Uterus (tissue), 4 donors: ENCODE measurements at regions of chr4 and their contacts with region 1.

Region 1: DNA sequence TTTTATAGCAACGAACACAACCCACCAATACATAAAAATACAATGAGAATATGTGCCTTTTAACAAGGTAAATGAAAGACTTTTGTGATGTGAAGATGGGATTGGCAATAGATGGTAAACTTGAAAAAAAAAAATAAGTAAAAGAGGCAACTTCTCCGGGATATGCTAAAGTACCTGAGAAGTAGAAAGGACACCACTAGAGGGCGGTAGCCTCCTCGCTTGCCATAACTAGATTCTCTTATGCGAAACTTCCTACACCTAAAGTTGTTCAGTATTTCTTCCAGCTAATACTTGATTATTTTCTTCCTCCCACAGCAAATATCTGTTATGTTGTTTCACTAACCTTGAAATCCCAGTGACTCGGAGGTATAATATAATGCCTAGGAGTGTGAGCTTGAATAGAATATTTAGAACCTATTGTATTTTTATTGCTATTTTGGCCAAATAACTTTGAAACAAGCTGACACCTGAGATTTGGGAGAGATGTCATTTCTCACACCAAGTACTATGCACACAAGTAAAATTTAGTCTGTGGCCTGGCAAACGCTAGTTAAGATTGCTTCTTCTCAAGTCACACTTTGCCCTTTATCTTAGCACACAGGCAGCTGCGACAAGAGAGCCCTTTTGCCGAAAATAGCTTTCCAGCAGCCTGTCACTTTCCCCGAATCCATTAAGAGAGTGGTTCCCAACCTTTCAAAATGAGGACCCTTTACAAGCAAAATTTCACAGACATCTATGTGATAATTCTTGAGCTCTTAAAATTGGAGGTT is 44.9 kb upstream of the PDLIM5 start:
- DNase-seq: peak; percentile 69 to 89
- H3K4me3 ChIP-seq: no peak overlapping the region
- H3K27ac ChIP-seq: peak overlapping the region; percentile 83 to 93
- H3K4me1 ChIP-seq: peaks cover 0 to 17% of the 10 kb centered on the region in 2 donors
- H3K27me3 ChIP-seq: no peaks in the 10 kb centered on the region
- CTCF ChIP-seq: peak; percentile 70 to 90 (median 79)
- POLR2A ChIP-seq: no peak

Region 2: GRCh38 chr4:93897559-93897958 is 509.3 kb before region 1 on chr4:
- intact Hi-C with region 1: no loop called
- DNase-seq: no peak
- H3K4me3 ChIP-seq: no peak overlapping the region
- H3K27ac ChIP-seq: no peak overlapping the region
- H3K4me1 ChIP-seq: no peaks in the 10 kb centered on the region
- H3K27me3 ChIP-seq: no peaks in the 10 kb centered on the region
- CTCF ChIP-seq: no peak
- POLR2A ChIP-seq: no peak

Region 3: GRCh38 chr4:94262163-94263016 is 144.5 kb before region 1 on chr4:
- intact Hi-C with region 1: no loop called
- DNase-seq: no peak
- H3K4me3 ChIP-seq: no peak overlapping the region
- H3K27ac ChIP-seq: no peak overlapping the region
- H3K4me1 ChIP-seq: no peaks in the 10 kb centered on the region
- H3K27me3 ChIP-seq: no peaks in the 10 kb centered on the region
- CTCF ChIP-seq: no peak
- POLR2A ChIP-seq: no peak

Region 4: DNA sequence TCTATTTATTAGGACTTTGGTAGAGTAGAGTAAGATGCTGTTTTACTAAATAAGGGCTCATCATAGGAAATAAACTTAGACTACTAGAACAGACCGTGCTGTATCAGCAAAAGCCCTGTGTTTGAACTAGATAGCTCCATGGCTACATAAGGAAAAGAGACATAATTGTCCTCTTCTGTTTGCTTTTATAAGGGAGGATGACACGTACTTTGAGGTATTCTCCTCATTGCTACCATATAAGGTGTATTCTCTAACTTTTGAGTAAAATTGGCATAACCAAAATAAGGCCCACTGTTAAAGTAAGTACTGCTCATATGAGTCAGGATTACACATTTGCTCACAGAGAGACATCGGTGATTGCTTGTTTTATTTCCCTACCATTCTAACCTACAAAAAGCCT is 109.2 kb after region 1 on chr4:
- intact Hi-C with region 1: no loop called
- DNase-seq: no peak
- H3K4me3 ChIP-seq: no peak overlapping the region
- H3K27ac ChIP-seq: peak overlapping the region; percentile 88 to 99
- H3K4me1 ChIP-seq: peaks cover 4 to 26% of the 10 kb centered on the region in 2 donors
- H3K27me3 ChIP-seq: no peaks in the 10 kb centered on the region
- CTCF ChIP-seq: no peak
- POLR2A ChIP-seq: no peak

Region 5: DNA sequence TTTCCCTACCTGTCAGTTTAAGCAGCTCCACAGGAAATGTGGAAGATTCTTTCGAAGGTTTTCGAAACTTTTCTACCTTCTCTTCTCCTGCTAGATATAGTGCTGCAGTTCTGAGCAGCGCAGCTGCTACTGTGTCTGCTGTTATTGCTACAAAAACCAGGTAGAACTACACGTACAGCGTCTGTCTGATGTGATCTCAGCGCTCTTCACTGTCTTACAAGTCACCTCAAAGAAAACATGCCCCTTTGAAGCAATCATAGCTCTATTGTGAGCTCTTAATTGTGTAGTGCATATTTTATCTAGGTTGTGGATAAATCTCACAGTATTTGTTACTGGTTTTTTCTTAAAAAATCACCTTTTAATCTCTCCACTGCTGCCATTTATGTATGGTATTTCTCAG is 203.3 kb after region 1 on chr4:
- intact Hi-C with region 1: loop called (anchors 10 kb)
- DNase-seq: no peak
- H3K4me3 ChIP-seq: no peak overlapping the region
- H3K27ac ChIP-seq: no peak overlapping the region
- H3K4me1 ChIP-seq: peaks cover 0 to 14% of the 10 kb centered on the region in 2 donors
- H3K27me3 ChIP-seq: no peaks in the 10 kb centered on the region
- CTCF ChIP-seq: no peak
- POLR2A ChIP-seq: no peak

Region 6: GRCh38 chr4:94654714-94655113 is 247.9 kb after region 1 on chr4:
- intact Hi-C with region 1: loop called (anchors 5 kb)
- DNase-seq: no peak
- H3K4me3 ChIP-seq: no peak overlapping the region
- H3K27ac ChIP-seq: no peak overlapping the region
- H3K4me1 ChIP-seq: no peaks in the 10 kb centered on the region
- H3K27me3 ChIP-seq: no peaks in the 10 kb centered on the region
- CTCF ChIP-seq: no peak
- POLR2A ChIP-seq: no peak